Naive thymus-derived CD4-positive, alpha-beta T cell (primary cell): ENCODE measurements at regions of chr6 and their contacts with region 1.

Region 1: GRCh38 chr6:112010328-112010727 is 43.6 kb upstream of the CCN6 start:
- DNase-seq: peak in 5 of 9 donors; percentile 37 to 57 (median 45)
- ATAC-seq: peak; percentile 56
- H3K4me3 ChIP-seq: no peak overlapping the region
- H3K4me3 Mint-ChIP-seq: peak overlapping the region in 1 of 10 donors; percentile 9
- H3K27ac ChIP-seq: no peak overlapping the region
- H3K27ac Mint-ChIP-seq: peak overlapping the region in 7 of 9 donors; percentile 0 to 41 (median 7)
- H3K4me1 ChIP-seq: no peaks in the 10 kb centered on the region
- H3K4me1 Mint-ChIP-seq: peaks cover 6 to 22% (median 14%) of the 10 kb centered on the region in 7 donors
- H3K27me3 ChIP-seq: no peaks in the 10 kb centered on the region
- H3K27me3 Mint-ChIP-seq: no peaks in the 10 kb centered on the region

Region 2: DNA sequence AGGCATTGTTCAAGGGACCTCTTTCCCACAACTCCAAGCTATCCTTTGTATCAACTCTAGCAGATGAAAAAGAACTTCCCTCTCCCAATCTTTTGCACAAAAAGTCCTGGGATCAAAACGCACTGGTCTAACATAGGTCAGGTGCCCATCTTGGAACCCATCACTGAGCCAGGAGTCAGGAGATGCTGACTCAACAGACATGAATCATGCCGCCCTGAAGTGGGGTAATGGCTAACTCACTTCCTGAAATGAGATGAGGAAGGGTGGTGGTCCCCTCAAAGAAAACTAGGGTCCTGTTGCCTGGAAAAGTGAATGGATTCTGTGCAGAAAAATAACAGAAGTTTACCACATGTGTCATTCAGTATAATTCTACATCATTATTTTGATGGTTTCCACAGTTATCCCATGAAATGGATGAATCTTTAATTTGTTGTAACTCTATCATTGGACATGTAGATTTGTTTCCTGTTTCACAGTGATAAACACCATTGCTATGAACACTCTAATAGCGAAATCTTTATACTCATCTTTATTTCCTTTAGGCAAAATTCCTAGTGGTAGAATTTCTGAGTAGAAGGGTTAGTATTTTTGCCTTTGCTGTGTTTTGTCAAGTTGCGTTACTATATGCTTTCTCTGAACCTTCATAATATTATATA is 771.7 kb before region 1 on chr6:
- CTCF ChIA-PET with region 1: no interaction called
- POLR2A ChIA-PET with region 1: no interaction called
- intact Hi-C with region 1: no loop called
- DNase-seq: no peak
- ATAC-seq: peak; percentile 48
- H3K4me3 ChIP-seq: no peak overlapping the region
- H3K4me3 Mint-ChIP-seq: no peak overlapping the region
- H3K27ac ChIP-seq: no peak overlapping the region
- H3K27ac Mint-ChIP-seq: no peak overlapping the region
- H3K4me1 ChIP-seq: no peaks in the 10 kb centered on the region
- H3K4me1 Mint-ChIP-seq: peaks cover 0 to 3% (median 0%) of the 10 kb centered on the region in 7 donors
- H3K27me3 ChIP-seq: no peaks in the 10 kb centered on the region
- H3K27me3 Mint-ChIP-seq: peaks cover 0 to 9% (median 0%) of the 10 kb centered on the region in 5 donors

Region 3: DNA sequence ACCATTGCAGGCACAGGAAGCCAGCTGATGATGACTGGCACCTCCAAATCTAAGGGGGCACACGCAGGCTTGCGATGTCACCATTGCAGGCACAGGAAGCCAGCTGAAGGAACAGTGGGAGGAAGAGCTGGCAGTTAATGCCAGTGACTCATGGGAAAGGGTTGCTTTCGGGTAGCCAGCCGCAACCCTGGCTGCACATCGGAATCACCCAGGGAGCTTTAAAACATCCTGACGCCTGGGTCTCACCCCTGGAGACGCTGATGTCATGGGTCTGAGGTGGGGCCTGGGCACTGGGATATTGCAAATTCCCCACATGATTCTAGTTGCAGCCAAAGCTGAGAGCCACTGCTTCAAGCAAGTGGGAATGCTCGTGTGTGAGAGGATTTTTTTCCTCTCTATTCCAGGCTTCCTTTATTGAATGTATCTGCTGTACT is 27.5 kb after region 1 on chr6:
- CTCF ChIA-PET with region 1: interaction called, 339 read pairs
- POLR2A ChIA-PET with region 1: interaction called, 175 read pairs
- intact Hi-C with region 1: no loop called
- DNase-seq: no peak
- ATAC-seq: peak; percentile 54
- H3K4me3 ChIP-seq: no peak overlapping the region
- H3K4me3 Mint-ChIP-seq: peak overlapping the region in 2 of 10 donors; percentile 16 to 36
- H3K27ac ChIP-seq: no peak overlapping the region
- H3K27ac Mint-ChIP-seq: peak overlapping the region in 3 of 9 donors; percentile 34 to 85 (median 73)
- H3K4me1 ChIP-seq: peaks cover 4 to 65% of the 10 kb centered on the region in 2 donors
- H3K4me1 Mint-ChIP-seq: peaks cover 27 to 93% (median 70%) of the 10 kb centered on the region in 7 donors
- H3K27me3 ChIP-seq: no peaks in the 10 kb centered on the region
- H3K27me3 Mint-ChIP-seq: peaks cover 0 to under 1% (median 0%) of the 10 kb centered on the region in 5 donors

Region 4: GRCh38 chr6:112163295-112164257 is 153.2 kb after region 1 on chr6:
- CTCF ChIA-PET with region 1: interaction called, 9 read pairs
- POLR2A ChIA-PET with region 1: no interaction called
- intact Hi-C with region 1: loop called in 1 of 2 experiments (anchors 1 kb)
- DNase-seq: peak; percentile 43 to 81 (median 64)
- ATAC-seq: peak; percentile 97
- H3K4me3 ChIP-seq: no peak overlapping the region
- H3K4me3 Mint-ChIP-seq: peak overlapping the region; percentile 49 to 88 (median 79)
- H3K27ac ChIP-seq: no peak overlapping the region
- H3K27ac Mint-ChIP-seq: peak overlapping the region in 7 of 9 donors; percentile 10 to 79 (median 48)
- H3K4me1 ChIP-seq: peaks cover 3 to 7% of the 10 kb centered on the region in 2 donors
- H3K4me1 Mint-ChIP-seq: peaks cover 9 to 18% (median 14%) of the 10 kb centered on the region in 7 donors
- H3K27me3 ChIP-seq: no peaks in the 10 kb centered on the region
- H3K27me3 Mint-ChIP-seq: peaks cover 25 to 60% (median 48%) of the 10 kb centered on the region in 5 donors